ENCODE measurements at regions of chr11 and their contacts with region 1.

Region 1: DNA sequence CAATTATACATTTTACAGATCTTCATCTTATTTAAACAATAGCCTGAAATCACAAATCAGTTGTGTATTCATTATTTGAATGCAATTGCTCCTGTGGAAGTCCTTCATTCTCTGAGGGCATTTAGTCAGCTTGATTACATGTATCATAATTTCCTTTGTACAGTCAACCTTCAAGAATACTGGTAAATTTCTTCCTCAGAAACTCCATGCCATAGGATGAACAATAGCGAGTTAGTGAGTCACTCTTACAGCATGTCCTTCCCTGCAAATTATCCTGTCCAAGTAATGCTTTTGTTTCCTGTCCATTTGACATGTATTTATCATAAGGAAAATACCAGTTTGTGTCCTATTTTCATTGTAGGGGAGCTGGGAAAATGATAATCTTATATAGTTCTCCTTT is 3.8 kb downstream of the OR10S1 start:
- DNase-seq: no peak
- H3K4me3 ChIP-seq: no peak overlapping the region
- H3K27ac ChIP-seq: no peak overlapping the region
- H3K4me1 ChIP-seq: no peaks in the 10 kb centered on the region
- H3K27me3 ChIP-seq: no peaks in the 10 kb centered on the region
- CTCF ChIP-seq: no peak
- POLR2A ChIP-seq: no peak

Region 2: GRCh38 chr11:123995119-123995518 is 21.3 kb after region 1 on chr11 and contains the start of gene OR10G6:
- intact Hi-C with region 1: no loop called
- DNase-seq: no peak
- H3K4me3 ChIP-seq: no peak within 1 kb of the TSS
- H3K27ac ChIP-seq: no peak within 1 kb of the TSS
- H3K4me1 ChIP-seq: no peaks in the 10 kb centered on the region
- H3K27me3 ChIP-seq: no peaks in the 10 kb centered on the region
- CTCF ChIP-seq: no peak
- POLR2A ChIP-seq: no peak
- total RNA-seq, gene OR10G6: not detected

Region 3: GRCh38 chr11:124039557-124039956 is 65.7 kb after region 1 on chr11:
- intact Hi-C with region 1: loop called (anchors 2 kb)
- DNase-seq: no peak
- H3K4me3 ChIP-seq: no peak overlapping the region
- H3K27ac ChIP-seq: no peak overlapping the region
- H3K4me1 ChIP-seq: no peaks in the 10 kb centered on the region
- H3K27me3 ChIP-seq: no peaks in the 10 kb centered on the region
- CTCF ChIP-seq: no peak
- POLR2A ChIP-seq: no peak

Measured in breast epithelium (tissue), 4 donors.